Right cardiac atrium (tissue), 5 donors: ENCODE measurements at regions of chr15 and their contacts with region 1.

Region 1: DNA sequence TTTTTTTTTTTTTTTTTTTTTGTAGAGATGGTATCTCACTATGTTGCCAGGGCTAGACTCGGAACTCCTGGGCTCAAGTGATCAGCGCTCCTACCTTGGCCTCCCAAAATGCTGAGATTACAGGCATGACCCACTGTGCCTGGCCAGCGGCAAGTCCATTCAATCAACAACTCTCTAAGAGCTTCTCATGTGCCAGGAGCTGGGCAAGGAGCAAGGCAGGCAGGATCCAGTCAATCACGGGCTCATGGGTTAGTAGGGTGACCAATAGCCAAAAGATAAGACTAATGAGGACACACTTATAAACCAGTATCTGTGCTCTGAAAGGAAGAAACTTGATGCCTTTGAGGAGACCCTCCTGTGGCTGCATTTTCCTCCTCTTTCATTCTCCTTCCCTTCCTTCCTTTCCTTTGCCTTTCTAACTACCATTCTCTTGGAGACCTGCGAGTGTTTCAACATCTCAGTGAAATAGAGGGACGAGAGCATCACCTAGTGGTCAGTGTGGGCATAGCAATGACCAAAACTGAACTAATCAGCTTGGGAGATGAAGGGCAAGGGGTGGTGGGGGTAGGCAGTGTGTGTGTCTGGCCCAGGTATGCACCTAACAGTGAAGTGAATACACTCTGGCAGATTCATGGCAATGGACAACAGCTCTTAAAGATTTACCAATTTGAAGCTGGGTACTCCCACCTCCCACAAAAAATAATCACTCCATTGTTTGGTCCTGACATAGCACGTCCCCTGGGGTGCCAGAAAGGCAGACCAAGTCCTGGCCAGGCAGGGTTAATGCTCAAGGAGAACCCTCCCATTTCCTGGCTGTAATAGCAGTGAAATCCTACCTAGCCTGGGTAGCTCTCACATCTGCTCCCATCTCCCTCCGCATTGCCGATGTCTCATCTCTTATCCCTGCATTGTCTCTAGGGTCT is 6.2 kb downstream of the RPP25 start:
- DNase-seq: peak; percentile 59 to 79 (median 73)
- ATAC-seq: peak; percentile 61 to 71
- H3K4me3 ChIP-seq: no peak overlapping the region
- H3K27ac ChIP-seq: no peak overlapping the region
- H3K4me1 ChIP-seq: no peaks in the 10 kb centered on the region
- H3K27me3 ChIP-seq: no peaks in the 10 kb centered on the region

Region 2: GRCh38 chr15:74635228-74635627 is 315.1 kb before region 1 on chr15:
- intact Hi-C with region 1: loop called in 3 of 4 experiments (anchors 5 to 10 kb)
- DNase-seq: peak; percentile 55 to 79 (median 75)
- ATAC-seq: peak; percentile 58 to 72
- H3K4me3 ChIP-seq: no peak overlapping the region
- H3K27ac ChIP-seq: no peak overlapping the region
- H3K4me1 ChIP-seq: no peaks in the 10 kb centered on the region
- H3K27me3 ChIP-seq: no peaks in the 10 kb centered on the region

Region 3: DNA sequence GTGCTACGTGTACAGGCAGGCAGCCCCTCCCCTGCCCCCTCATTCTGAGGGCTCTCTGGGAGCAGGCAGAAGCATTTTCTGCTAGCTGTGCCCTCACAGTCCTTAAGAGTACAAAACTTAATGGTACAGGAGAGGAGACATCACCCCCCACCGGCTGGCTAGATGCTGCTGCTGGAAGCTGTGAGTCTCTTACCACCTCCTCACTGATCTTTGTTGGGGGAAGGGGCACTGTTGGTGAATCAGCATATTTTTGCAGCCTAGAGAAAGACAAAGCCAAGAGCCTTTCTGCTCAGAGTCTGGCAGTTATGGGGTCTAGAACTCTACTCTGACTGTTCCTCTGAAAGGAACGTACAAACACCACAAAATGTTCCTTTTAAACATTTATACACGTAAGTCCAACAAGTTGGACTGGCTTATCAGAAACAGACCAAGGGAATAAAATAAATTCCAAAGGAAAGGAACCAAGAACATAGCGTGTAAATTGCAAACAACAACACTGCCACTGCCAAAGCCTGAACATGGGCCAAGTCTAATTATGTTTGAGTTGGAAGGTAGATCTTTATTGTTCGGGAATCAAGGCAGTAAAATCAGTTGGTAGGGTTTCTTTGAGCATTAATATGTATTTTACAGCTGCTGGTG is 307.5 kb before region 1 on chr15:
- intact Hi-C with region 1: loop called in 3 of 4 experiments (anchors 5 to 10 kb)
- DNase-seq: peak in 1 of 3 donors; percentile 77
- ATAC-seq: peak; percentile 34 to 72
- H3K4me3 ChIP-seq: no peak overlapping the region
- H3K27ac ChIP-seq: peak overlapping the region; percentile 61
- H3K4me1 ChIP-seq: peaks cover 13% of the 10 kb centered on the region
- H3K27me3 ChIP-seq: no peaks in the 10 kb centered on the region